ENCODE measurements at regions of chr6 and their contacts with region 1.

Region 1: DNA sequence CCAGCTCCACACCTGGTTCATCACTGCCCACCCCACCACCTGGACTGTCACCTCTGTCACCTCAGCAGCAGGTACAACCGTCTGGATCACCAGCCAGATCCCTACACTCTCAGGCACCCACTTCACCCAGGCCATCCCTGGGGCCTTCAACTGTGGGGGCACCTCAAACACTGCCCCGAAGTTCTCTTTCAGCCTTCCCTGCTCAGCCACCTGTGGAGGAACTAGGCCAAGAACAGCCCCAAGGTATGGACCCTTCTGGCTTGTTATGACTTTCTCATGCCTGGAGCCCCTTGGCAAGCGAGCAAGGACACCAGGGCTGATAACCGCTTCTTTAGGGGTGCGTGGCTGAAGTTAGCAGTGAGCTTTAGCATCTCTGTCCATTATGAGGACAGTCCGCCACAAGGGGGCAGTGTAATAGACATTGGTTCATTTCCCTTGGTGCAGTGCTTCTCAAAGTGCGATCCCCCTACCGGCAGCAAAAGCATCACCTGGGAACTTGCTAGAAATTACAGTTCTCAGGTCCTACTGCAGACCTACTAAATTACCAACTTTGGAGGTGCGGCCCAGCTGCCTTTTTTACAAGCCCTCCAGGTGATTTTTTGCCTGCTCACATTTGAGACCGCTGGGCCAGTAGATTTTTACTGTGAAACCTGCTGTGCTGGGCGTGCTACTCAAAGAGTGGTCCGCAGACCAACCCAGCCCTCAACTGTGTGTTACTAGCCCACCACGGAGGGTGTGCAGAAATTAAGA is 32.5 kb downstream of the PNPLA1 start:
- DNase-seq: peak; percentile 91 to 92
- H3K4me3 ChIP-seq: no peak overlapping the region
- H3K4me3 Mint-ChIP-seq: no peak overlapping the region
- H3K27ac Mint-ChIP-seq: no peak overlapping the region
- H3K4me1 ChIP-seq: no peaks in the 10 kb centered on the region
- H3K4me1 Mint-ChIP-seq: no peaks in the 10 kb centered on the region
- H3K27me3 ChIP-seq: no peaks in the 10 kb centered on the region
- H3K27me3 Mint-ChIP-seq: no peaks in the 10 kb centered on the region
- CTCF ChIP-seq: peak; percentile 97 to 98

Region 2: GRCh38 chr6:36290661-36291620 is 11.5 kb before region 1 on chr6:
- CTCF ChIA-PET with region 1: interaction called, 10 read pairs
- POLR2A ChIA-PET with region 1: no interaction called
- intact Hi-C with region 1: no loop called
- DNase-seq: peak; percentile 35 to 51
- H3K4me3 ChIP-seq: no peak overlapping the region
- H3K4me3 Mint-ChIP-seq: no peak overlapping the region
- H3K27ac Mint-ChIP-seq: peak overlapping the region; percentile 66
- H3K4me1 ChIP-seq: peaks cover 17% of the 10 kb centered on the region
- H3K4me1 Mint-ChIP-seq: peaks cover 7% of the 10 kb centered on the region
- H3K27me3 ChIP-seq: no peaks in the 10 kb centered on the region
- H3K27me3 Mint-ChIP-seq: no peaks in the 10 kb centered on the region
- CTCF ChIP-seq: no peak

Region 3: DNA sequence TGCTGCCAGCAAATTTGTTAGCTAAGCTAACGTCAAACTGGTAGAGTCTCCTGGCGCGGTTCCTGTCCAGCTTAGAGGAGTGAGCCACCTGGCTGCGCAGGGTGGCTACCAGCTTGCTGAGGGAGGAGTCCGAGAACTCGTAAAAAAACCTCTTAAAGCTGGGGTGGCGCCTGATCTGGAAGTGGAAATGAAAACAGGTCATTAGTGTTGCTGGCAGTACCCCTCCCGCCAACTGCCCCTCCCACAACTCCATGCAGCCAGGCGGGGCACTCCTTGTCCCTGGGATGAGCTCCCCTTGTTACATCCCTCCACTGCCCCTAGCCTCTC is 17.0 kb after region 1 on chr6:
- CTCF ChIA-PET with region 1: interaction called, 18 read pairs
- POLR2A ChIA-PET with region 1: no interaction called
- intact Hi-C with region 1: no loop called
- DNase-seq: no peak
- H3K4me3 ChIP-seq: no peak overlapping the region
- H3K4me3 Mint-ChIP-seq: no peak overlapping the region
- H3K27ac Mint-ChIP-seq: no peak overlapping the region
- H3K4me1 ChIP-seq: peaks cover 12% of the 10 kb centered on the region
- H3K4me1 Mint-ChIP-seq: peaks cover 9% of the 10 kb centered on the region
- H3K27me3 ChIP-seq: no peaks in the 10 kb centered on the region
- H3K27me3 Mint-ChIP-seq: no peaks in the 10 kb centered on the region
- CTCF ChIP-seq: no peak

Region 4: DNA sequence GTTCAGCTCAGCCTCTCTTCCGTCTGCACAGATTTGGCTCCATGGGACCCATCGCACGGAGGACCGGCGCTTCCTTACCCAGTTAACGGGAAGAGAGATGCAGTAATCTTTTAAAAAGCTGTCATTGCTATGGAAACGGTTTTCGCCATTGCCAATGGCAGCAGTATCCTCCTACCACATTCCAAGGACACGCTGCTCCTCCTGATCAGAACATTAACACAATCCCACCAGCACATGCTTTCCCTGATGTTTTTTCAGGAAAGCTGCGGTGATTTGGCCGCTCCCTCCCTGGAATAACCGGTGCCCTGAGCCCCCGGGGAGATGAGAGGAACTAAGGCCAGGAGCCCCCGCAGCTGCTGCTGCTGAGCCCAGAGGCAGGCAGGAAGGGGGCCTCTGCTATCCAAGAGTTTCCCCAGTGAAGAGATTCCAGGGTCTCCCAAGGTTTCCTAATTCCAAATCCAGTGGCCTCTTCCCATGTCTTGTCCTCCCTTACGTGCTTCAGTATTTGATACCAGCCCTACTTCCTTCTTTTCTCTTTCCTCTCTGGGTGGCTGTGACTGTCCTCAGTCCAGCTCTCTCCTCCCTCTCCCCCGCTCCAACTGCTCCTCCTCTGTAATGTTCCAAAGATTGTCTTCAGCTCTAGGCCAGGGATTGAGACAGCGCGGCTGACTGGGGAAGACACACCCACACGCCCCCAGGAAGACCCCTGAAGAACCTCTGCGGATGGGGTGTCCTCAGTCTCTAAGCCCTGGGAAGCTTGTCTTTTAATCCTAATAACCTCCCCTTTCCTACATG is 31.7 kb after region 1 on chr6:
- CTCF ChIA-PET with region 1: interaction called, 15 read pairs
- POLR2A ChIA-PET with region 1: no interaction called
- intact Hi-C with region 1: no loop called
- DNase-seq: no peak
- H3K4me3 ChIP-seq: no peak overlapping the region
- H3K4me3 Mint-ChIP-seq: peak overlapping the region; percentile 74
- H3K27ac Mint-ChIP-seq: peak overlapping the region; percentile 82
- H3K4me1 ChIP-seq: peaks cover 31% of the 10 kb centered on the region
- H3K4me1 Mint-ChIP-seq: peaks cover 21% of the 10 kb centered on the region
- H3K27me3 ChIP-seq: no peaks in the 10 kb centered on the region
- H3K27me3 Mint-ChIP-seq: no peaks in the 10 kb centered on the region
- CTCF ChIP-seq: no peak

Region 5: GRCh38 chr6:36340618-36341454 is 38.4 kb after region 1 on chr6:
- CTCF ChIA-PET with region 1: interaction called, 15 read pairs
- POLR2A ChIA-PET with region 1: no interaction called
- intact Hi-C with region 1: loop called (anchors 5 kb)
- DNase-seq: peak; percentile 79 to 82
- H3K4me3 ChIP-seq: peak overlapping the region; percentile 28
- H3K4me3 Mint-ChIP-seq: peak overlapping the region; percentile 77
- H3K27ac Mint-ChIP-seq: no peak overlapping the region
- H3K4me1 ChIP-seq: peaks cover 28% of the 10 kb centered on the region
- H3K4me1 Mint-ChIP-seq: no peaks in the 10 kb centered on the region
- H3K27me3 ChIP-seq: no peaks in the 10 kb centered on the region
- H3K27me3 Mint-ChIP-seq: no peaks in the 10 kb centered on the region
- CTCF ChIP-seq: peak; percentile 91 to 92

Region 6: DNA sequence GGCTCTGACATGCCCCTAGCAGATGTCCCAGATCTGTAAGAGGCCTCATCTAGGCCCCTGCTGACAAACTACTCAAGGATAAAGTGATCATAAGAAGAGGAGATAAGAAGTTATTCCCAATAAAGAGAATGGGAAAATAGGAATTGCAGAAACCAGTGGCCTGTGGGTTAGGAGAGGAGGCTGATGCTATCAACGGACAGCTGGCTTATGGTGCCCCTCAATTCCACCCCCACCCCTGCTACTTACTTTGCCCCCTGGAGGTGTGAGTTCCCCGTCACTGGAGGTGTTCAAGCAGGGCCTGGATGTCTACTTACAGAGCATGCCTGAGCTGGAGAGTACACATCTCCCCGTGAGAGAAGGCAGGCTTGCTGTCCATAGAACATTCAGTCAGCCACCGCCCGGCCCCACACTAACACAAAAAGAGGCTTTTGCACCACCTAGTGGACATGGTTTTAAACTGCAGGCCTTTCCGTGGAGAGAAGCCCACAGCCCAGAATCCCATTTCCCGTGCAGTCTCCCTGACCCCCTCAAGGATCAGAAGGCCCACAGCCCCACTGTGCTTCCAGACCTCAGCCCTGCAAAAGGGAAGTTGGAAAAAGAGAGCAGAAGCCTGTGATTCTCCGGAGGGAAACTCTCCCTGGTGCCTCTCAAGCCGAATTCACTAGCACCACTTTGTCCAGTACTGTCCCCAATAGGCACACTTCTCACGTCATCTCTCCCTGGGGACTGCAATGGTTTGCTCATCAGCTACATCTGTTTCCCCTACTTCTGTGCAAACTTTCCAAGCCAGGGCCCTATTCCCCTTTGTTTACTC is 58.0 kb after region 1 on chr6:
- CTCF ChIA-PET with region 1: interaction called, 22 read pairs
- POLR2A ChIA-PET with region 1: interaction called, 4 read pairs
- intact Hi-C with region 1: loop called (anchors 1 kb)
- DNase-seq: peak; percentile 79 to 84
- H3K4me3 ChIP-seq: no peak overlapping the region
- H3K4me3 Mint-ChIP-seq: no peak overlapping the region
- H3K27ac Mint-ChIP-seq: no peak overlapping the region
- H3K4me1 ChIP-seq: peaks cover 17% of the 10 kb centered on the region; the same call in 1 of the 2 replicates
- H3K4me1 Mint-ChIP-seq: no peaks in the 10 kb centered on the region
- H3K27me3 ChIP-seq: no peaks in the 10 kb centered on the region
- H3K27me3 Mint-ChIP-seq: no peaks in the 10 kb centered on the region
- CTCF ChIP-seq: peak; percentile 71 to 82

Measured in Caco-2 (cell line).